Right cardiac atrium (tissue), 5 donors: ENCODE measurements at regions of chr17 and their contacts with region 1.

Region 1: GRCh38 chr17:77140166-77140878 is 447 bp upstream of the SEC14L1 start:
- DNase-seq: peak; percentile 99 to 100 (median 100)
- ATAC-seq: peak; percentile 98 to 99
- H3K4me3 ChIP-seq: peak overlapping the region; percentile 95
- H3K27ac ChIP-seq: peak overlapping the region; percentile 90
- H3K4me1 ChIP-seq: no peaks in the 10 kb centered on the region
- H3K27me3 ChIP-seq: no peaks in the 10 kb centered on the region

Region 2: GRCh38 chr17:77096570-77097214 is 43.6 kb before region 1 on chr17:
- intact Hi-C with region 1: loop called in 3 of 4 experiments (anchors 5 to 10 kb)
- DNase-seq: peak in 2 of 3 donors; percentile 32 to 72
- ATAC-seq: peak; percentile 81 to 82
- H3K4me3 ChIP-seq: no peak overlapping the region
- H3K27ac ChIP-seq: peak overlapping the region; percentile 77
- H3K4me1 ChIP-seq: peaks cover 12% of the 10 kb centered on the region
- H3K27me3 ChIP-seq: no peaks in the 10 kb centered on the region

Region 3: DNA sequence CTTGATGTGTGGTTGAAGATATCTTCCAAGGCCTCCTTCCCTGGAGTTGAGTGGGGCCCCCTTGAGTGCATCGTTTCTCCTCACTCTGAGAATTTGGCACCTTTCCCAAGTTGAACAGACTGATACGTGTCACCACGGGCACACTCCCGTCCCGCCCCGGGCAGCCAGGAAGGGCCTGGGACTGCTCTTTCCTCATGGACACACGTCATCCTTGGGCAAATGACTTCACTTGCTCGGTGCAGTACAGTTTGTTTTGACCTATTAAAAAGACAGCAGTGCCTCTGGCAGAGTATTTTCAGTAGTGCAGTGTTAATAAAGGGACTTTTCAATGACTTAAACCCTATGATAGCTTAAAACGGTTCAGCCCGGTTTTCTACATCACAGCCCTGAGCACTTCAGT is 60.4 kb after region 1 on chr17:
- intact Hi-C with region 1: no loop called
- DNase-seq: no peak
- ATAC-seq: peak; percentile 40 to 83
- H3K4me3 ChIP-seq: no peak overlapping the region
- H3K27ac ChIP-seq: no peak overlapping the region
- H3K4me1 ChIP-seq: no peaks in the 10 kb centered on the region
- H3K27me3 ChIP-seq: no peaks in the 10 kb centered on the region

Region 4: DNA sequence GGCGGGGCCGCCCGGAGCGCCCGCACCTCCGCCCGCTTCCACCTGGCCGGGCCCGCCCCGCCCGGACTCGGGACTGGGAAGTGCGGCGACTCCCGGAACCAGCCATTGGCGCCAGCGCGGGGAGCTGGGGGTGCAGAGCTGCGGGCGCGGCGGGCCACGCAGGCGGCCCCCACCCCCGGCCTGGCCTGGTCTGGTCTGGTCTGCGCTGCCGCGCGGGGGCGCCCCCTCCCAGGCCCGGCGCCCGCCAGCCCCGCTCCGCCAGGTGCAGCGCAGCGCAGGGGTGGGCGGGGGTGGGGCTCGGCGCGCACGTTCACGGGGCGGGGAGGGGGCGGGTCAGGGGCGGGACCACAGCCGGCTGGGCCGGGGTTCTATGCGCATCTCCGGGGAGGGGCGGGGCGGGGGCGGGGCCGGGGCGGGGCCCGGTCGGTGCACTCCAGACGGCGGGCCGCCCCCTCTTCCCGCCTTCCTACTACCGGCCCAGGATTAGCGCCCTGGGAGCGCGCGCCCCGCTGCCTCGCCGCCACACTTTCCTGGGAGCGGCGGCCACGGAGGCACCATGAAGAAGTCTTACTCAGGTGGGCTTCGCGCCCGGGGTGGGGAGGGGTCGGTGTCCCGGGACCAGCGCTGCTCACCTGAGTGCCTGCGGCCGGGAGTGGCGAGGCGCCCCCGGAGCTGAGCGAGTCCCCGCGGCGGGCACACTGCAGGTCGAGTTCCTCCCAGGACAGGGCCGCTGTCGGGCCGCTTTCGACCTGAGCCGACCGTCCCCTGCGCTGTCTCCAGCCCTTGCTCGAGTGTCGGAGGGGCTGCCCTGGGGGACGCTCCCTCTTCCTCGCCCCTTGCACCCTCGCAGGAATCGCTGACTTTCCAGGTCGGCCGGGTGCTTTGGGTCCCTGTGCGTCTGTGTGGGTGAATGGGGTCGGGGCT is 140.9 kb after region 1 on chr17:
- intact Hi-C with region 1: no loop called
- DNase-seq: peak; percentile 43 to 79 (median 77)
- ATAC-seq: peak; percentile 51 to 60
- H3K4me3 ChIP-seq: peak overlapping the region; percentile 82
- H3K27ac ChIP-seq: no peak overlapping the region
- H3K4me1 ChIP-seq: peaks cover 4% of the 10 kb centered on the region
- H3K27me3 ChIP-seq: no peaks in the 10 kb centered on the region